ENCODE measurements at regions of chr15 and their contacts with region 1.

Region 1: DNA sequence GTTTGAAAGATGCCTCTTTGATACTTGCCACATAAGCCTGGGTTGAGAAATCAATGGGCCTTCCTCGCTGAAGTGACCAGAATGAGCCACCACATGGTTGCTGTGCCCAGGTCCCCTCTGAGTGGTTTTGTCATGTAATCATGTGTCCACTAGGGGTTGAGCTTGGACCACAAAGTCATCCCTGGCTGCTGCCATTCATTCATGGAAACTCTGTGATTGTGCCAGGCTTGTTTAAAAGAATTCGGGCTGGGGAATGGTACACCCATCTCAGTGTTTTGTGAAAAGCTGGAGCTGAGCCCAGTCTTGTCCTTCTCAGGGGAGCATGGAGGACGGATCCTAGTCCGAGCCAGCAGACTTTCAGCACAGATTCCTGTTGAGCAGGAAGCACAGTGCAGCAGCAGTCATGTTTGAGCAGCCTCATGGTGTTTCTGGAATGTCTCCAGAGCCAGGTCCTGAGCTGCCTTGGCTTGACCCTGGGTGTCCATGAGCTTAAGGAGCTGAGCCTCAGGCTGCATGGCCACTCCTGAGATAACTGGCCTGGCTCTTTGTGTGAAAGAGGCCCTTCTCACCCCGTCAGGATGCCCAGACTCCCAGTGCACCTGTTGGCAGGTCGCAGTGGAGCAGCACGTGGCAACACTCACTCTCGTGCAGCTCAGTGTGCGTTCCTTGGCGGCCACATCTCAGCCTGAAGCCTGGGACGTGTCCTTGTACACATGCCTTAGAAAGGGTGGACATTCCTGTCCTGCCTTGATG is 260.3 kb upstream of the TPM1 start:
- DNase-seq: peak; percentile 94
- H3K4me3 ChIP-seq: no peak overlapping the region
- H3K27ac ChIP-seq: peak overlapping the region; percentile 66 to 78 (median 68)
- H3K4me1 ChIP-seq: peaks cover 0 to 17% (median 10%) of the 10 kb centered on the region in 4 donors
- H3K27me3 ChIP-seq: no peaks in the 10 kb centered on the region
- CTCF ChIP-seq: peak; percentile 58 to 79 (median 73)
- EP300 ChIP-seq: peak in 1 of 4 donors; percentile 16
- POLR2A ChIP-seq: no peak

Region 2: DNA sequence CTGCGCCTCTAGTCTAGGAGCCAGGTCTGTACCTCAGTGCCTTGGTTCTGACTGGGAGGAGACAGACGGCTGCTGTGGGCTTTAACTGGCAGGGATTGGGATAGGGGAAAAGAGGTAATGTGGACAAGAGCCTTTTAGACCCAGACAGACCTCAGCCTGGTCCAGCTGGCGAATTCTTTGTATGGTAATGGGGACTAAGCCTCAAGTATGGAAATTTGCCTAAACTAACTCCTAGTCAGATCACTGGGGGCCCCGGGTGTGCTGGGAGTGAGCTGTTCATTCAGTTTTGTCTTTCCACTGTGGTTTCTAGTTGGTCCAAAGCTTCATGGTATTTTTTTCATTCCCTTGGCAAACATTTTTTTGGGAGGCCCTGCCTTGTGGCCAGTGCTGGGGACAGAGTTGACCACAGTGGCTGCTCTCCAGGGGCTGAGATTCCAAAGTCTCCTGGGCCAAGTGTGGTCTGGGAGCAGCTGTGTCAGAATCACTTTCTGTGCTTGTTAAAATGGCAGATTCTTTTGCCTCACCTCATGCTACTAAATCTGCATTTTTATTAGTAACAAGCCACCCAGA is 355.7 kb before region 1 on chr15:
- intact Hi-C with region 1: no loop called
- DNase-seq: no peak
- H3K4me3 ChIP-seq: no peak overlapping the region
- H3K27ac ChIP-seq: no peak overlapping the region
- H3K4me1 ChIP-seq: peaks cover 0 to 40% (median 33%) of the 10 kb centered on the region in 4 donors
- H3K27me3 ChIP-seq: no peaks in the 10 kb centered on the region
- CTCF ChIP-seq: no peak
- EP300 ChIP-seq: no peak
- POLR2A ChIP-seq: no peak

Region 3: GRCh38 chr15:62835351-62835750 is 53.1 kb after region 1 on chr15:
- intact Hi-C with region 1: no loop called
- DNase-seq: no peak
- H3K4me3 ChIP-seq: no peak overlapping the region
- H3K27ac ChIP-seq: no peak overlapping the region
- H3K4me1 ChIP-seq: peaks cover 0 to 14% (median 2%) of the 10 kb centered on the region in 4 donors
- H3K27me3 ChIP-seq: no peaks in the 10 kb centered on the region
- CTCF ChIP-seq: no peak
- EP300 ChIP-seq: no peak
- POLR2A ChIP-seq: no peak

Region 4: GRCh38 chr15:62847900-62848489 is 65.8 kb after region 1 on chr15:
- intact Hi-C with region 1: loop called (anchors 5 kb)
- DNase-seq: peak; percentile 90
- H3K4me3 ChIP-seq: no peak overlapping the region
- H3K27ac ChIP-seq: peak overlapping the region; percentile 44 to 82 (median 64)
- H3K4me1 ChIP-seq: peaks cover 0 to 62% (median 38%) of the 10 kb centered on the region in 4 donors
- H3K27me3 ChIP-seq: no peaks in the 10 kb centered on the region
- CTCF ChIP-seq: peak; percentile 56 to 84 (median 64)
- EP300 ChIP-seq: no peak
- POLR2A ChIP-seq: no peak

Region 5: DNA sequence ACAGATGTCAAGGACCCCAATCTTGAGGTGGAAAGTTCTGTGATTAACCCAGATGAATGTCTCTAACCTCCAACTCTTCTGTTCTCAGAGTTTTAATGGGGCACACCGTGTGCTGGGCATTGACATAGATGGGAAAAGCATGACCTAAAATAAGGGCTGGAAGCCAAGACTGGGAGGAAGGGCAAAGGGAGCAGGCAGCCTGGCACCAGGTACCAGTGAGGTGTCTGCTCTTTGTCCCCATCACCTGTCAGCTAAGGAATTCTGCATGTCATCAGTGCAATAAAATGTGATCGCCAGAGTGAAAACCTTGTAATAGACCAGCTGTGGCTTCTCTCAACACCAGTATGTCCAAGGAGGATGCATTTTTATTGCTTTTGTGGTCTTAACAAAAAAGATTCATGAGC is 116.9 kb after region 1 on chr15:
- intact Hi-C with region 1: loop called (anchors 10 kb)
- DNase-seq: peak; percentile 93
- H3K4me3 ChIP-seq: no peak overlapping the region
- H3K27ac ChIP-seq: peak overlapping the region; percentile 85 to 96 (median 90)
- H3K4me1 ChIP-seq: peaks cover 0 to 76% (median 71%) of the 10 kb centered on the region in 4 donors
- H3K27me3 ChIP-seq: no peaks in the 10 kb centered on the region
- CTCF ChIP-seq: no peak
- EP300 ChIP-seq: peak; percentile 99 to 100 (median 100)
- POLR2A ChIP-seq: no peak

Region 6: DNA sequence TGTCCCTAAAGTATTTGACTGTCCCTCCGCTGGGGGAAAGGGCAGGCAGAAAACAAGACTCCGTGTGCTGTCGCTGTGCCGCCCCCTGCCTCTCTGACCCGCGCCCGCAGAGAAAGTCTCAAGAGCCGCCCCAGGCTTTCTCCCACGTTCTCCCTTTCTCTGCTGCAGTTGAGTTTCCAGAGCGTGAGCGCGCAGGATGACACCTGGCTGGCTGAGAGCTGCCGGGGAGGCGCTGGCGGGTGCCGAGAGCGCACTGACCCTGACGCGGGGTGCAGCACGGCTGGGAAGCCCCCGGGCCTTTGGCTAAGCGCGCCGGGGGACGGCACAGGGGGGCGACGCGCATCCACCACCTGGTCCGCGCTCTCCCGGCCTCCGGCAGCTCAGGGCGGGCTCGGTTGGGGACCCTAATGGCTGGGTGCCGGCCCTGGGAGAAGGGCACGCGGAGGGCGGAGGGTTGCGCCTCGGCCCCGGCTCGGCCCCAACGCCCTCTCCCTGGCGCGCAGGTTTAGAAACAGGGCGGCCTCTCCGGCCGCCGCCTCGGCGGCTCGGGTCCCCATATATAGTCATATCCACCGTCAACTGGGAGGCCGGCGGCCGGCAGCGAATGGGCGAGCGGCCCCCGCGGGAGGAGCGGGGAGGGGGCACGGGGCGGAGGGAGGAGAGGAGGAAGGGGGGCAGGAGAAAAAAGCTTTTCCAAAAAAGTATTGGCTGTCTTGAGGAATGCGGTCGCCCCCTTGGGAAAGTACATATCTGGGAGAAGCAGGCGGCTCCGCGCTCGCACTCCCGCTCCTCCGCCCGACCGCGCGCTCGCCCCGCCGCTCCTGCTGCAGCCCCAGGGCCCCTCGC is 260.0 kb after region 1 on chr15 and contains the start of gene TPM1:
- intact Hi-C with region 1: loop called (anchors 5 kb)
- DNase-seq: peak; percentile 97
- H3K4me3 ChIP-seq: peak within 1 kb of the TSS; percentile 78 to 90 (median 87)
- H3K27ac ChIP-seq: peak within 1 kb of the TSS; percentile 97 to 99 (median 98)
- H3K4me1 ChIP-seq: peaks cover 0 to 14% (median 5%) of the 10 kb centered on the region in 4 donors
- H3K27me3 ChIP-seq: no peaks in the 10 kb centered on the region
- CTCF ChIP-seq: peak in 1 of 4 experiments; percentile 11
- EP300 ChIP-seq: peak in 3 of 4 donors; percentile 15 to 67 (median 44)
- POLR2A ChIP-seq: peak; percentile 49 to 79
- total RNA-seq, gene TPM1: 2,634 to 4,179 (median 3,850) TPM

Region 7: DNA sequence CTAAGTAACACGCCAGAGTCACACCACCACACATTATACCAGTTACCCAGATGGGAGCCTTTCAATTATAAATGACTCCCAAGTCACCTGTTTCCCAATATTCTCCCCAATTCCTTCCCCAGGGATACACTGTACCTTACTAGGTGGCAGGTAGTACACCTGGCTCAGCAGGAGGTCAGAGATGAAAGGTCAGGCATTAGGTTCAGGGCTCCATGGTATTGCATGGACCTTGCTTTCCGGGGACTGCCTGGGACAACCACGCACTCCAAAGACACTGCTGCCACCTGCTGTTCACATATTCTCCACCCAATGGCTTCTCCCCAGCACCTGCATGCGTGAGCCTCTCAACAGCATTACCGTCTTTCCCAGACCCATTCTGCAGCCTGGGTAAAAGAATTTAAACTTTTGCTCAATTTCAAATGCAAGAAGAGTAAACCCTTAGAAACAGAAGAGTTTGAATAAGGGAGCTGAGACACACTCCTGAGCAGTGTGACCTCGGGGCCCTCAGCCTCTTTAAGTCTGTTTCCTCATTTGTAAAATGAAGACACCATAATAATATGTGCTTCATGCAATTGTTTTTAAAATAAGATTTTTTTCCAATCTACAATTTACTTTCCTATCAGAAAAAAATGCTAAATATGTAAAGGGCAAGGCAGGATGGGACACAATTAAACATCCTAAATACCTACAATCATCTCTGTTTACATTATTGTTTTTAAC is 311.4 kb after region 1 on chr15:
- intact Hi-C with region 1: loop called (anchors 1 kb)
- DNase-seq: peak; percentile 90
- H3K4me3 ChIP-seq: no peak overlapping the region
- H3K27ac ChIP-seq: peak overlapping the region; percentile 51 to 71 (median 69)
- H3K4me1 ChIP-seq: peaks cover 0 to 31% (median 29%) of the 10 kb centered on the region in 4 donors
- H3K27me3 ChIP-seq: no peaks in the 10 kb centered on the region
- CTCF ChIP-seq: peak; percentile 71 to 92 (median 86)
- EP300 ChIP-seq: no peak
- POLR2A ChIP-seq: no peak

Region 8: DNA sequence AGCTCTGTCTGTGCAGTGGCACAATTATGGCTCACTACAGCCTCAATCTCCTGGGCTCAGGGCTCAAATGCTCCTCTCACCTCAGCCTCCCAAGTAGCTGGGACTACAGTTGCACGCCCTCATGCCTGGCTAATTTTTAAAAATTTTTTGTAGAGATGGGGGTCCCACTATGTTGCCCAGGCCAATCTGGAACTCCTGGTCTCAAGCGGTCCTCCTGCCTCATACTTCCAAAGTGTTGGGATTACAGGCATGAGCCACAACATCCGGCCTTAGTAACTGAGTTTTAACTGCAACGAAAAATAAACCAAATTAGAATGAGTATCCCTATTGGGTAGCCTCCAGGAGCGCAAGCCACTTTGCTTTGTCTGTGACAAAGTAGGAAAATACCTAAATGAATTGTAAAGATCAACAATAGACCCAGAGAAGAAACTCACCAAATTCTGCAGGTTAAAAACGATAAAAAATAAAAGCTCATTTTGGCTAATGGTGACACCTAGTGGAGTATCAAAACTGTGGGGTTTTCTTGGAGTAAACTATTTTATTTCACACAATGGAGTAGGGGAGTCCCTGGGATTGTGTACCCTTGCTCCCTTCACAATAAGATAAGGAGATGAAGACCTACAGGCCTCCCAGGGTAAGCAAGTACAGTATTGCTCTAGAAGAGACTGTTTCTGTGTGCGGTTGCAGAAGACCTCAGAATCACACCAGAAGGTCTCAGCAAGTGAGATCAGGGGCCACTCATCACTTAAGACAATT is 620.5 kb after region 1 on chr15:
- intact Hi-C with region 1: loop called (anchors 10 kb)
- DNase-seq: no peak
- H3K4me3 ChIP-seq: no peak overlapping the region
- H3K27ac ChIP-seq: no peak overlapping the region
- H3K4me1 ChIP-seq: no peaks in the 10 kb centered on the region
- H3K27me3 ChIP-seq: no peaks in the 10 kb centered on the region
- CTCF ChIP-seq: peak; percentile 5 to 69 (median 59)
- EP300 ChIP-seq: no peak
- POLR2A ChIP-seq: no peak